ENCODE measurements at regions of chr6 and their contacts with region 1.

Region 1: GRCh38 chr6:138109042-138109997 is 2.1 kb upstream of the PERP start:
- DNase-seq: no peak
- ATAC-seq: no peak

Region 2: GRCh38 chr6:138001750-138002349 is 107.5 kb before region 1 on chr6:
- intact Hi-C with region 1: loop called (anchors 1 kb)
- DNase-seq: no peak
- ATAC-seq: peak; percentile 42

Region 3: DNA sequence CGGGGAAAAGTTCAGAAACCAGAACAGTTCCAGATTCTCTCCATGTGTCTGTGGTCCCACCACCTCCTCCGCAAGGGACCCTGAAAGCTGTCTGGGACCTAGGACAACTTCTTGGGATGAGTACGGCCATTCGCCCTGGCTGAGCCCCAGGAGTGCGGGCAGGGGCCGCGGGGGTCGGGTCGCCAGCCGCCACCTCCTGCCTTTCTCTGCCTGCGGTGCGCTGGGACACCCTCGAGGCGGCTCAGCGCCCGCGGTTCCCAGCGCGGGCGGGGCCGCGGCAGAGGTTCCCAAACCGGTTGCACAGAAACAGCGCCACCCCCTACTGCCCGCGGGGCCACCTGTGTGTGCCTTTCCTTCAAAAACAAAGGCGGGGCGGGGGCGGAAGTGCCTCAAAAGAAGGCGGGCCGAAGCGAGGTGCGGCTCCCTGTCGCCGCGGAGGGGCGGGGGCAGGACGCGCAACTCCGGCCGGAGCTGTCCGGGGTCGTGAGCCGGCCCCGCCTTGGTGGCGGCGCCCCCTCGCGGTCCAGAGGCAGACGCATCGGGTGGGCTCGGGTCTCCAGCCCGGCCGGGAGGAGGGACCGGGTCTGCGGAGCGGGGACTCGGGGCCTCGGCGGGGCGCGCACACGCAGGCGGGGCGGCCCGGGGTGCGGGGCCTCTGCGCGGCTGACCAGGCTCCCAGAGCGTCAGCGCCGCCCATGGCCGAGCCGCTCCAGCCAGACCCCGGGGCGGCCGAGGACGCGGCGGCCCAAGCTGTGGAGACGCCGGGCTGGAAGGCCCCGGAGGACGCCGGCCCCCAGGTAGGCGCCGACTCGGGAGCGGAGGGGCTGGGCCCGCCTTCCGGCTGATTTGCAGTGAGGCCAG is 294.7 kb after region 1 on chr6 and contains the start of gene HEBP2:
- intact Hi-C with region 1: loop called (anchors 5 kb)
- DNase-seq: peak; percentile 98
- ATAC-seq: peak; percentile 96
- total RNA-seq, gene HEBP2: 103 TPM

Region 4: GRCh38 chr6:138545621-138545980 is 436.3 kb after region 1 on chr6:
- intact Hi-C with region 1: loop called (anchors 10 kb)
- DNase-seq: peak; percentile 90
- ATAC-seq: peak; percentile 94